Motor neuron (in vitro differentiated cells): ENCODE measurements at regions of chr10 and their contacts with region 1.

Region 1: DNA sequence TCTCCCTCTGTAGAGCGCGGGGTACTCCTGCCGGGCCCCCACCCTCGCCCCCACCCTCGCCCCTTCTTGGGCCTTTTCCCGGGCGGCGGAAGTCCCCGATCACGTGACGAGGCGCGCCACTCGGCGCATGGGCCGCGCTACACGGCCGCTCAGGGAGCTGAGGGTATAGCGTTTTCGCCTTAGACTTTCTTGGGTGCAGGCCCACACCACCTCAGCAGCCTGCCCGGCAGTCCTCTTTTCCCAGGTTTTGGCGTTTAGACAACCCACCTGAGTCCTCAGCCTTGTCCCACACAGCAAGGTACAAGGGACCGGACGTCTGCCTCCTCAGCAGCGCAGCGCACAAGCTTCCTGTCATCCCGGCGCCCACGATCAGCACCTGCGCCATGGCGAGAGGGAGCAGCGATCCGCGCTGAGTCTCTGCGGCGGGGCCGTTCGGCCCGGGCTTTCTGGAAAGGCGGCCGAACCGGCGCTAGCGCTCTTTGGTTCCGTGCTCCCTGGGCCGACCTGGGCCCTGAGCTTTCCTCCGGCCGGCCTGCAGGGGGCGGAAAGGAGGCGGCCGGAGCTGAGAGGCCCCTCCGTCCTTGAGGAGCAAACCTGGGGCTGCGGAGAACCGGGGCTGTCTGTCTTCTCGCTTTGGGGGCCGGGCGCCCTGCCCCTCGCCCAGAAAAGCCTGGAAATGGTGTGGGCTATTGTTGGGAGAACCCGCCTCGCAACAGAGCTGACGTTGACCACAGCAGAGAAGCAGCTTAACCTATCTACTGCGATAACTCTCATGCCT is at the start of gene RNLS:
- ATAC-seq: peak; percentile 91 to 95 (median 94)
- H3K4me3 ChIP-seq: peak within 1 kb of the TSS; percentile 24 to 50 (median 40)
- H3K27ac ChIP-seq: peak within 1 kb of the TSS; percentile 49 to 70
- H3K4me1 ChIP-seq: no peaks in the 10 kb centered on the region
- total RNA-seq, gene RNLS: 0.95 to 13.2 (median 2.3) TPM in 7 of 8 experiments, not detected in the other

Region 2: GRCh38 chr10:88332503-88333247 is 250.3 kb before region 1 on chr10:
- in situ Hi-C with region 1: no loop called
- ATAC-seq: no peak
- H3K4me3 ChIP-seq: no peak overlapping the region
- H3K27ac ChIP-seq: no peak overlapping the region
- H3K4me1 ChIP-seq: no peaks in the 10 kb centered on the region

Region 3: GRCh38 chr10:88687853-88688467 is 105.0 kb after region 1 on chr10:
- in situ Hi-C with region 1: loop called in 1 of 9 experiments (anchors 10 kb)
- ATAC-seq: no peak
- H3K4me3 ChIP-seq: no peak overlapping the region
- H3K27ac ChIP-seq: no peak overlapping the region
- H3K4me1 ChIP-seq: no peaks in the 10 kb centered on the region